Activated B cell treated with CpG ODN at 0.5 μM for 24 hours (primary cell): ENCODE measurements at regions of chr4 and their contacts with region 1.

Region 1: DNA sequence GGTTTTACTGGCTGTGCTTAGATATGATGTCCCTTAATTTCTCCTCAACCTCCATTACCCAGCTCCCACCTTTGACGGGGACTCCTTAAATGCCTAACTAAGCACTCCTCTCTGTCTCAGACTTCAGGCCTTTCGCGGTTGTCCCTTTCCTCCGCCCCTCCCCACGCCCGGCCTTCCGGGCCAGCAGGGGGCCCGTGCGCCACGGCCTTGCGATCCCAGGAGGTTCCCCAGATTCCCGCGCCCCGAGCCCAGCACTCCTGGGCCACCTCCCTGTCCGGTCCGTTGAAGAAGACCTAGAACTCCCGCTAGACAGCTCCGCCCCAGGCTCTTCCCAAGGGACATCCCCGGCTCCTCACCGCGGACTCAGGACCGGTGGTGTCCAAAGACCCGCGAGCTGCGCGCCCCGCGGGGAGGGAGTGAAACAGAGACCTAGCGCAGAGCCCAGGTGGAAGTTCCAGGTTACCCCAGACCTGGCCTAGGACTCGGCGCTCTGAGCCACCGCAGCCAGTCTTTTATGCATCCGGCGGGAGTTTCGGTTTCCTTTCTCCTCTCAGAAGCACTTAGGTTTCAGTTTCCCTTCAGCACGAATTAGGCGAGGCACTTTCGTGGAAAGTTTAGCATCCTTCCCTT is at the start of gene DDX60:
- DNase-seq: peak; percentile 68
- ATAC-seq: peak; percentile 92
- H3K4me3 Mint-ChIP-seq: peak within 1 kb of the TSS; percentile 95
- H3K27ac Mint-ChIP-seq: peak within 1 kb of the TSS; percentile 96
- H3K4me1 Mint-ChIP-seq: peaks cover 20% of the 10 kb centered on the region
- H3K27me3 Mint-ChIP-seq: no peaks in the 10 kb centered on the region
- CTCF ChIP-seq: no peak
- total RNA-seq, gene DDX60: 17.6 and 17.9 TPM in 2 replicates

Region 2: DNA sequence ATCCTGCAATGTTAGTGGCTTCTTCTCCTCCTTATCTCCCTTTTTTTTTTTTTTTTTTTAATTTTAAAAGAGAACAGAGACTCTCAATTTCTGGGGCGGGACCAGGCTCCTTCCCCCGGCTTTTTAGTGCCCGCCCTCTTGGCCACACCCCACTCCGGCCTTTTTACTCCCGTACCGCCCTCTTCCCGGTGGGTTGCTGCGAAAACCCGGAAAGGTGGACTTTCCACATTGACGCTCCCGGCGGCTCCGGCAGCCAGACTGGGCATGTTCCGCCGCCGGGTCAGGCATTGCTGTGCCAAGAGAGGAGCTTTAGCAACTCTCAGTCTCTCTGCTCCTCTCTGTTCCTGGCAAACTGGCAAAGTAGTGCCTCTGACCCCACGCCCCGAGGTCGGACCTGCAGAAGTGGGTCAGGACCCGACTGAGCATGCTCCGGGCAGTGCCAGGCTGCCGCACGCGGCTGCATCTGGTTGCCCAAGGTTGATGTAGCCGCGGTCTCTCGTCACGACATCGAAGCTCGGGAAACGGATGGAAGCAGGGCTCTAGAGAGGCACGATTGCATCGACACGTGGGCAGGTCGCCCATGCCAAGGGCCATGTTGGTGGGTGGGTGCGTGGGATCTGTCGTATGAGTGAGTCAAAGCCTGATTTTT is 1708.9 kb after region 1 on chr4:
- CTCF ChIA-PET with region 1: no interaction called
- POLR2A ChIA-PET with region 1: no interaction called
- intact Hi-C with region 1: loop called (anchors 10 kb)
- DNase-seq: peak; percentile 86
- ATAC-seq: peak; percentile 76
- H3K4me3 Mint-ChIP-seq: peak overlapping the region; percentile 89
- H3K27ac Mint-ChIP-seq: peak overlapping the region; percentile 47
- H3K4me1 Mint-ChIP-seq: peaks cover 13% of the 10 kb centered on the region
- H3K27me3 Mint-ChIP-seq: peaks cover 21% of the 10 kb centered on the region
- CTCF ChIP-seq: no peak